ENCODE measurements at regions of chr12 and their contacts with region 1.

Region 1: GRCh38 chr12:120580787-120581723 is at the start of gene POP5:
- DNase-seq: peak; percentile 94 to 97
- H3K4me3 ChIP-seq: peak within 1 kb of the TSS; percentile 86 to 97 (median 87)
- H3K27ac ChIP-seq: peak within 1 kb of the TSS; percentile 70; the same call in 1 of the 2 replicates
- H3K4me1 ChIP-seq: peaks cover 0 to 3% (median 1%) of the 10 kb centered on the region in 4 experiments; a peak in 4 of 7 replicates
- H3K27me3 ChIP-seq: peaks cover 0 to 2% (median 0%) of the 10 kb centered on the region in 4 experiments; a peak in 1 of 7 replicates
- CTCF ChIP-seq: no peak
- EP300 ChIP-seq: no peak
- POLR2A ChIP-seq: peak; percentile 59 to 83
- RAD21 ChIP-seq: 0 out of 4 replicates have a peak, but pooled peaks of 1 of the 2 experiments have one; percentile 4
- total RNA-seq, gene POP5: 54.7 and 59.7 TPM in 2 replicates

Region 2: DNA sequence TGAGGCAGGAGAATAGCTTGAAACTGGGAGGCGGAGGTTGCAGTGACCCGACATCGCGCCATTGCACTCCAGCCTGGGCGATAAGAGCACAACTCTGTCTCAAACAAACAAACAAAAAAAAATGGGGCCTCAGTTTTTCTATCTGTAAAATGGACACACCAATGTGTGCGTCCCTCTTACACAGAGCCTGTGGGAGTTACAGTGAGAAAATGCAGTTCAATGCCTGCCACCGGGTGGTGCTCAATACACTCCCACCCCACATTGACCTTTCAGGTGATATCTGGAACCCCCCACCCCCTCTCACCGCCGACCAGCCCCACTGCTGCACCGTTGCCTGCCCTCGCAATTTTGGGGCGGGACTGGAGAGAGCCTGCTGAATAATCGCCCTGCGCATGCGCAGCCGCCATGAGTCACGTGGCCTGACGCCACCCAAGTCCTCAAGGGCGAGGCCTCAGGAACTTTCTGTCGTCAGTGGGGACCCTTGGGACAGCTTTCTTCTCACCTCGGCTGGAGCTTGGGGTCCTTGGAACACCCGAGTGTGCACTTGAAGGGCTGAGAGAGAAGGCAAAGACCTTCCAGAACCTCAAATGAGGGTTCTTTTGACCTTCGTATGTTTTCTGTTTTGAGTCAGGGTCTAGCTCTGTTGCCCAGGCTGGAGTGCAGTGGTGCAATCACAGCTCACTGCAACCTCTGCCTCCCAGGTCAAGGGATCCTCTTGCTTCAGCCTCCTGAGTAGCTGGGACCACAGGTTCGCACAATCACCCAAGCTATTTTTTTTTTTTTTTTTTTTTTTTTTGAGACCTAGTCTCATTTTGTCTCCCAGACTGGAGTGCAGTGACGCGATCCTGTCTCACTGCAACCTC is 44.7 kb after region 1 on chr12:
- CTCF ChIA-PET with region 1: interaction called, 18 read pairs
- POLR2A ChIA-PET with region 1: interaction called, 5 read pairs
- DNase-seq: peak; percentile 51 to 76
- H3K4me3 ChIP-seq: no peak overlapping the region
- H3K27ac ChIP-seq: no peak overlapping the region
- H3K4me1 ChIP-seq: no peaks in the 10 kb centered on the region
- H3K27me3 ChIP-seq: no peaks in the 10 kb centered on the region
- CTCF ChIP-seq: peak; percentile 53 to 63 (median 58)
- EP300 ChIP-seq: no peak
- POLR2A ChIP-seq: no peak
- RAD21 ChIP-seq: peak; percentile 62 to 67

Region 3: GRCh38 chr12:120710031-120710804 is 129.2 kb after region 1 on chr12 and contains the start of gene UNC119B:
- CTCF ChIA-PET with region 1: interaction called, 20 read pairs
- POLR2A ChIA-PET with region 1: interaction called, 7 read pairs
- DNase-seq: peak in 1 of 2 experiments; percentile 82
- H3K4me3 ChIP-seq: peak within 1 kb of the TSS; percentile 72 to 95 (median 87)
- H3K27ac ChIP-seq: peak within 1 kb of the TSS; percentile 82
- H3K4me1 ChIP-seq: peaks cover 5 to 13% (median 9%) of the 10 kb centered on the region in 4 experiments; a peak in 6 of 7 replicates
- H3K27me3 ChIP-seq: no peaks in the 10 kb centered on the region
- CTCF ChIP-seq: no peak
- EP300 ChIP-seq: no peak
- POLR2A ChIP-seq: peak in 1 of 2 experiments; percentile 66; a peak in 1 of 3 replicates
- RAD21 ChIP-seq: no peak
- total RNA-seq, gene UNC119B: 50.1 and 51.9 TPM in 2 replicates

Measured in H1 (cell line).